ENCODE measurements at regions of chr1 and their contacts with region 1.

Region 1: DNA sequence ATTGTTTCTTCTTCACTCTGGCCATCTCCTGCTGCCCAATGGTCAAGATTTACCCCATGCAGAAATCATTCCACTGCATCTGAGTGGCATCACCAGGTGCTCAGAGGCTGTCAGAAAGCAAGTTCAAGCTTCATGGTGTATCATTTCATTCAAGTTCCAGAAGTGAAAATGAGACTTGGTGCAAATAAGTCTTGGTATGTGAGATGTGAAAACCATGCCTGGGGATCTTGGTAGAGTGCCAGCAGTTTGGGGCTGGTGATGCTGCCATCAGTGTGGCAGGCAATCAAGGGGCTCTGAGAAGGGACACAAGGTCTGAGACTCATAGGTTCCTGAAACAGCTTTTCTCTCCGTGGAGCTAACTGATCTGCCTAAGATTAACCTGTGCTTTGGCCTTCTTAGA is 52.0 kb downstream of the CD2 start:
- DNase-seq: peak; percentile 65
- H3K4me3 Mint-ChIP-seq: peak overlapping the region; percentile 79
- H3K27ac Mint-ChIP-seq: peak overlapping the region; percentile 95
- H3K4me1 Mint-ChIP-seq: peaks cover 86% of the 10 kb centered on the region
- H3K27me3 Mint-ChIP-seq: no peaks in the 10 kb centered on the region

Region 2: DNA sequence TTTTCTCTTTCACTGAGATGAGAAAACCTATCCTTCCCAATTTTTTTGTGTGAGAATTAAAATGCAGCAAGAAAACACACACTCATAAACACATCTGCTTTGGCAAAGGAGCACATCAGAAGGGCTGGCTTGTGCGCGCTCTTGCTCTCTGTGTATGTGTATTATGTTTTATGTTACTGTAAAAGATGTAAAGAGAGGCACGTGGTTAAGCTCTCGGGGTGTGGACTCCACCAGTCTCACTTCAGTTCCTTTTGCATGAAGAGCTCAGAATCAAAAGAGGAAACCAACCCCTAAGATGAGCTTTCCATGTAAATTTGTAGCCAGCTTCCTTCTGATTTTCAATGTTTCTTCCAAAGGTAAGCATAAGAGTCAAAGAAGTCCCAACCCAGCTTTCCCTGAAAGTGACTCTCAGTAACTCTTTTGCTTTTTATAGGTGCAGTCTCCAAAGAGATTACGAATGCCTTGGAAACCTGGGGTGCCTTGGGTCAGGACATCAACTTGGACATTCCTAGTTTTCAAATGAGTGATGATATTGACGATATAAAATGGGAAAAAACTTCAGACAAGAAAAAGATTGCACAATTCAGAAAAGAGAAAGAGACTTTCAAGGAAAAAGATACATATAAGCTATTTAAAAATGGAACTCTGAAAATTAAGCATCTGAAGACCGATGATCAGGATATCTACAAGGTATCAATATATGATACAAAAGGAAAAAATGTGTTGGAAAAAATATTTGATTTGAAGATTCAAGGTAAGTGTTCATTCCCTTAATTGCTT is 51.9 kb before region 1 on chr1 and contains the start of gene CD2:
- CTCF ChIA-PET with region 1: interaction called, 12 read pairs
- POLR2A ChIA-PET with region 1: interaction called, 324 read pairs
- DNase-seq: peak; percentile 73
- H3K4me3 Mint-ChIP-seq: peak within 1 kb of the TSS; percentile 99
- H3K27ac Mint-ChIP-seq: peak within 1 kb of the TSS; percentile 95
- H3K4me1 Mint-ChIP-seq: peaks cover 39% of the 10 kb centered on the region
- H3K27me3 Mint-ChIP-seq: no peaks in the 10 kb centered on the region
- total RNA-seq, gene CD2: 329 to 340 TPM

Region 3: DNA sequence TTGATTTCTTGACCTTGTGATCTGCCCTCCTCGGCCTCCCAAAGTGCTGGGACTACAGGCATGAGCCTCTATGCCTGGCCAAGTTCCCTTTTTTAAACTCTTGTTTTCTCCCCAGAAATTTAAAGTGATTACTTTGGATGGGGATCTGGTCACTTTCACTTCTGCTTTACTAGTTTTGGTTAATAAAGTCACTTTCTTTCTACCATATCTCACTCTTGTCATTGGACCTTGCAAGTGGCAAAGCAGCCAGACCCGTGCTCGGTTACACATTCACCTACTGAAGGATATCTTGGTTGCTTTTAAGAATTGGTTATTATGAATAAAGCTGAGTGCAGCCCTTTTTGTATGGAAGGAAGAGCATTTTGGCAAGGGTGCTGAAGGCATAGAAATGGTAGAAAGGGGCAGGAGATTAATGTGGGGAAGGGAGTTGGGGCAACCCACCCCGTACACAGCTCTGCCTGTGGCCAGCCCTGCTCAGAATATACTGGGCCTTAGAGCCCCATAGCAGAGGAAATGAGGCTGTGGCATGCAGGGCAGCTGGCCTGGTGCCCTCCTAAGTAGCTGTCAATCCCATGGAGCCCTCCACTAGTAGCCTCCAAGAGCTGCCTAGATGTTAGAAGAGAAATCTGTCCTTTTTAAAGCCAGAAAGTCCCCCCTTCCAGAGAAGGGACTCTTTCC is 11.3 kb before region 1 on chr1:
- CTCF ChIA-PET with region 1: interaction called, 4 read pairs
- POLR2A ChIA-PET with region 1: interaction called, 13 read pairs
- DNase-seq: no peak
- H3K4me3 Mint-ChIP-seq: no peak overlapping the region
- H3K27ac Mint-ChIP-seq: no peak overlapping the region
- H3K4me1 Mint-ChIP-seq: peaks cover 74% of the 10 kb centered on the region
- H3K27me3 Mint-ChIP-seq: no peaks in the 10 kb centered on the region

Region 4: GRCh38 chr1:116826818-116827606 is 20.8 kb after region 1 on chr1:
- CTCF ChIA-PET with region 1: interaction called, 3 read pairs
- POLR2A ChIA-PET with region 1: interaction called, 10 read pairs
- DNase-seq: peak; percentile 77
- H3K4me3 Mint-ChIP-seq: peak overlapping the region; percentile 58
- H3K27ac Mint-ChIP-seq: peak overlapping the region; percentile 96
- H3K4me1 Mint-ChIP-seq: peaks cover 55% of the 10 kb centered on the region
- H3K27me3 Mint-ChIP-seq: no peaks in the 10 kb centered on the region